ENCODE measurements at regions of chr6 and their contacts with region 1.

Region 1: GRCh38 chr6:12033770-12034169 is 21.7 kb downstream of the HIVEP1 start:
- DNase-seq: no peak
- H3K4me3 ChIP-seq: no peak overlapping the region
- H3K27ac ChIP-seq: no peak overlapping the region
- H3K4me1 ChIP-seq: peaks cover 0 to 13% of the 10 kb centered on the region in 2 donors
- H3K27me3 ChIP-seq: no peaks in the 10 kb centered on the region
- CTCF ChIP-seq: no peak
- POLR2A ChIP-seq: no peak

Region 2: GRCh38 chr6:12126051-12126450 is 92.3 kb after region 1 on chr6:
- intact Hi-C with region 1: no loop called
- DNase-seq: no peak
- H3K4me3 ChIP-seq: no peak overlapping the region
- H3K27ac ChIP-seq: no peak overlapping the region
- H3K4me1 ChIP-seq: no peaks in the 10 kb centered on the region
- H3K27me3 ChIP-seq: no peaks in the 10 kb centered on the region
- CTCF ChIP-seq: no peak
- POLR2A ChIP-seq: no peak

Region 3: DNA sequence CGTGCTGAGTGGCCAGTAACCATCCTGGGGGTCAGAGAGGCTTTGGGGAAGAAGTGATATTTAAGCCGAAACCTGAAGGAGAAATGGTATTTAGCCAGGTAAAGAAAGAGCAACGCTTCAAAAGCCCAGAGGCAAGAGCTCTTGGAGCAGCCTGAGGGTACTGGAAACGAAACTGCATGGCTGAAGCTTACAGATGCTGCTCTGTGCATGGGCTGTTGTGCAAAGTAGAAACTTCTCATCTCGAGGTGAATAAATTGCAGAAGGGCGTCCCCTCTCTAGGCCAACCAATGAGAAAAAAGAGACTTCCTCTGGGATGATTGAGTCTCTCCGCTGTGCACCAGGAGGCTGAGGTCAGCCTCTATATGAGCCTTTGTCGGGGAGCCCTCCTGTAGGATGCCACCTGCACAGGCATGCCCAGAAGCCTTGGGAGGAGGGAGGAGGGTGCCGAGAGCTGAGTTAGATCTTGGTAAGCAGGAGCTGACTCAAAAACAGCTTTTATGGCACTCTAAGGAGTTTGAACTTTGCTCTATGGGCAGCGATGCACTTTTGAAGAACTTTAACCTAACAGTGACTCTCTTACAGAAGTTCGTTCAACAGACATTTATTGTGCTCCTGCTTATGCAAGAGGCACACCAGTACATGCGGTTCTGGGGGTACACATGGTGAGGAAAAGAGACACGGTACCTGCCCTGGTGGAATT is 194.8 kb after region 1 on chr6:
- intact Hi-C with region 1: loop called in 1 of 2 experiments (anchors 10 kb)
- DNase-seq: no peak
- H3K4me3 ChIP-seq: no peak overlapping the region
- H3K27ac ChIP-seq: no peak overlapping the region
- H3K4me1 ChIP-seq: peaks cover 0 to under 1% of the 10 kb centered on the region in 2 donors
- H3K27me3 ChIP-seq: no peaks in the 10 kb centered on the region
- CTCF ChIP-seq: no peak
- POLR2A ChIP-seq: no peak

Measured in adrenal gland (tissue), 19 donors.